ENCODE measurements at regions of chr1 and their contacts with region 1.

Region 1: GRCh38 chr1:212062832-212063438 is 27.4 kb downstream of the DTL start:
- DNase-seq: no peak
- H3K4me3 ChIP-seq: no peak overlapping the region
- CTCF ChIP-seq: peak; percentile 63

Region 2: DNA sequence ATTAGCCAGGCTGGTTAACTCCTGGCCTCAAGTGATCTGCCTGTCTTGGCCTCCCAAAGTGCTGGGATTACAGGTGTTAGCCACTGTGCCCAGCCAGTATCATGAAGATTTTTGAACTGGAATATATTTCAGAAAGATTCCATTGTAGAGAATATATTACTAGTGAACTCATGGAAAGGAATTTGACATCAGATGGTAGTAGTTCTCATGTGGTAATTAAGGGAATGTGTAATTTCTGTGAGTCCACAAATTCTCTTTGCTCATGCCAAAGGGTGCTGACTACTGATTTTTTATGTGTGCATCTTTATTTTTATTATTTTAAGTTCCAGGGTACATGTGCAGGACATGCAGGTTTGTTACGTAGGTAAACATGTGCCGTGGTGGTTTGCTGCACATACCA is 17.0 kb before region 1 on chr1:
- CTCF ChIA-PET with region 1: interaction called, 21 read pairs
- POLR2A ChIA-PET with region 1: no interaction called
- DNase-seq: no peak
- H3K4me3 ChIP-seq: no peak overlapping the region
- CTCF ChIP-seq: no peak

Region 3: DNA sequence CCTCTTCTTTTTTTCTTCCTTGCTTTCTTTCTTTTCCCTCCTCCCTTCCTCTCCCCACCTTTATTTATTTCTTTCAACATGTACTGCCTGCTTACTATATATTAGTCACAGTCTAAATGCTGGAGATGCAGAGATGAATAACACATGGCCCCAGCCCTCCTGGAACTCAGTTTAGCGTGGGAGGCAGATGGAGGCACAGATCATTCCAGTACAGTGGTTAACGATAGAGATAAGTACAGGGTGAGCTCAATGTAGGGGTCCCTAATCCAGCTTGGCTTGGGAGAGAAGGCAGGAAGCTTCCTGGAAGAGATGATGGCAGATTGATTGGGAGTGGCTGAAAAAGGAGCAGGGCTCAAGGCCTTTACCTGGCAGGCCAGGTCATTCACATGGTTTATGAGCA is 166.7 kb after region 1 on chr1:
- CTCF ChIA-PET with region 1: no interaction called
- POLR2A ChIA-PET with region 1: no interaction called
- DNase-seq: no peak
- H3K4me3 ChIP-seq: no peak overlapping the region
- CTCF ChIP-seq: no peak

Region 4: DNA sequence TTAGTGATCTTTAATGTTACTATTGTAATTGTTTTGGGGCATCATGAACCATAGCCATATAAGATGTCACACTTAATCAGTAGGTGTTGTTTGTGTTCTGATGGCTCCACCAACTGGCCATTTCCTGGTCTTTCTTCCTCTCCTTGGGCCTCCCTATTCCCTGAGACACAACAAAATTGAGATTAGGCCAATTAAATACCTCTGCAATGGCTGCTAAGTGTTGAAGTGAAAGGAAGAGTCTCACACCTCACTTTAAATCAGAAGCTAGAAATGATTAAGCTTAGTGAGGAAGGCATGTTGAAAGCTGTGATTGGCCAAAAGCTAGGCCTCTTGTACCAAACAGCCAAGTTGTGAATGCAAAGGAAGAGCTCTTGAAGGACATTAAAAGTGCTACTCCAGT is 253.0 kb after region 1 on chr1:
- CTCF ChIA-PET with region 1: interaction called, 16 read pairs
- POLR2A ChIA-PET with region 1: no interaction called
- DNase-seq: no peak
- H3K4me3 ChIP-seq: no peak overlapping the region
- CTCF ChIP-seq: no peak

Region 5: GRCh38 chr1:212368073-212368484 is 305.1 kb after region 1 on chr1:
- CTCF ChIA-PET with region 1: interaction called, 144 read pairs
- POLR2A ChIA-PET with region 1: no interaction called
- DNase-seq: peak; percentile 23
- H3K4me3 ChIP-seq: no peak overlapping the region
- CTCF ChIP-seq: peak; percentile 81

Measured in AG04449 (cell line).